Breast epithelium (tissue), 4 donors: ENCODE measurements at regions of chr14 and their contacts with region 1.

Region 1: DNA sequence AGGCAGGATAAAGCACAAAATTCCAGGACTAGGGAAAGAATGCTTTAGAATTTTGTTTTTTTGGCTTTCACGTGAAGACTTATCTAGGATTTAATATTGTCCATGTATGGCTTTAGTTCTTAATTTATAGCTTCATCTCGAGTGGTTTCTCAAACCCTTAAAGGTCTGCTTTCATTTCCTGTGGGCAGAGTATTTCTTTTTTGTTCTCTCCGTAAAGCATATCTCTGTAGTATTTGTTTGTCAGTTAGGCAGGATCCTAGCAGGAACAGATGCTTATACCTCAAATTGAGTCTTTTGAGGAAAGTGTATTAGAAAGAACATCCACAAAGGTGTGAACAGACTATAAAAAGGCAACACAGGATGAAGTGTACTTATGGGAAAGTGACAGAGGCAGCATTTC is 697.1 kb upstream of the SEL1L start:
- DNase-seq: no peak
- H3K4me3 ChIP-seq: no peak overlapping the region
- H3K27ac ChIP-seq: no peak overlapping the region
- H3K4me1 ChIP-seq: no peaks in the 10 kb centered on the region
- H3K27me3 ChIP-seq: no peaks in the 10 kb centered on the region
- CTCF ChIP-seq: no peak
- POLR2A ChIP-seq: no peak

Region 2: DNA sequence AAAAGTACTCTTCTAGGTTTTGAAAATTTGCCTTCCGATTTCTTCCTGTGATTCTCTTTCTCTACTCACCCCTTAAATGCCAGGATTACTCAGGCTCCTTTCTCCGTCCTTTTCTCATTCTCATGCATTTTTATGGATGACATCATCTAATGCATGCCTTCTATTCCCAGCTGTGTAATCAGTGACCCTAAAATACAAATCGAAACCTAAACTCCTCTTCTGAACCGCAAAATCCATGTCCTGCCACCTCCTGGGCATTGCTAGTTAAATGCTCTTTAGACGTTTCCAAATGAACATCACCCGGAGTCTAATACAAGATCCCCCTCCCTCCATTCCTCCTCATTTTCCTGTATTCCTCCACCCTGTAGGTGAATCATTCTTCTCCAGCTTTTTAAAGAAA is 1596.1 kb after region 1 on chr14:
- intact Hi-C with region 1: loop called (anchors 5 kb)
- DNase-seq: no peak
- H3K4me3 ChIP-seq: peak overlapping the region in 1 of 3 donors; percentile 16
- H3K27ac ChIP-seq: no peak overlapping the region
- H3K4me1 ChIP-seq: no peaks in the 10 kb centered on the region
- H3K27me3 ChIP-seq: no peaks in the 10 kb centered on the region
- CTCF ChIP-seq: no peak
- POLR2A ChIP-seq: no peak